HEK293 (cell line): ENCODE measurements at regions of chr2 and their contacts with region 1.

Region 1: GRCh38 chr2:176140513-176141317 is 10.6 kb upstream of the HOXD4 start:
- H3K4me3 ChIP-seq: peak overlapping the region; percentile 55
- H3K27ac ChIP-seq: peak overlapping the region; percentile 60; the same call in 1 of the 2 replicates
- H3K4me1 ChIP-seq: peaks cover 8% of the 10 kb centered on the region; the same call in 1 of the 2 replicates
- CTCF ChIP-seq: peak; percentile 97

Region 2: DNA sequence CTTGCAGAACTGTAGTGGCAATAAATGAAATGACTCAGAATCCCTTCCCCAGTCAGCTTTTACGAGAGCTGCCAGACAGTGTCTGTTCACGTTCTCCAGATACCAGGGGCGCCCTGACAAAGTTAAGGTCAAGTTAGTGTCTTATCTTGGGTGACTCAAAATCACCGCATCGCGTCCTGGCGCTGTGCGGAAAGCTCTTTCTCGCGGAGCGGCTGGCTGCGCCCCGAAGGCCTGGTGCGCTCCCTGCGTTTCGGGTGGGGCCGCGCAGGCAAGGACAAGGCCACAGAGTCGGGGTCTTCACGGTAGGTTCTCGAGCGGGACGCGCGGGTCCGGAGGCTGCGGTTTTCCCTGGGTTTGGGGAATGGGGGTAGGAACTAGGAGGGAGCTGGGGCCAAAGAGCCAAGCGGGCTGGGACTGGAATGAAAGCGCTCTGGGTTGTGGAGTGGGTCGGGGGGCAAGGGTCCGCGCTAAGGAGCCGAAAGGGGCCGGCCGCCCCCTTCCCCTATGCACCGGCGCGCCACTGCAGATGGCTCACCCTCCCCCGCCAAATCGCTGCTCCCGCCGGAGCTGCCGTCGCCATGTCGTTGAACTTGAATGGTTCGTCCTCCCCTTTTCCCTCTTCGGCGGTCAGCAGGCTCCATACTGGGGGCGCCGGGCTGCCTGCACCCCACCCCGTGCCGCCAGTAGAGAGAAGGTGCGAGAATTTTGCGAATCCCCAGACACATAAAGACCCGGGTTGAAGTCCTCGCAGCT is 36.2 kb before region 1 on chr2:
- CTCF ChIA-PET with region 1: interaction called, 3 read pairs
- POLR2A ChIA-PET with region 1: interaction called, 10 read pairs
- H3K4me3 ChIP-seq: peak overlapping the region; percentile 74
- H3K27ac ChIP-seq: peak overlapping the region; percentile 100
- H3K4me1 ChIP-seq: peaks cover 4% of the 10 kb centered on the region
- CTCF ChIP-seq: peak; percentile 96

Region 3: GRCh38 chr2:176151442-176152369 is 11.0 kb after region 1 on chr2 and contains the start of gene HOXD4:
- CTCF ChIA-PET with region 1: interaction called, 17 read pairs
- POLR2A ChIA-PET with region 1: interaction called, 5 read pairs
- H3K4me3 ChIP-seq: peak within 1 kb of the TSS; percentile 66
- H3K27ac ChIP-seq: peak within 1 kb of the TSS; percentile 95
- H3K4me1 ChIP-seq: peaks cover 20% of the 10 kb centered on the region
- CTCF ChIP-seq: no peak

Region 4: GRCh38 chr2:176445956-176446355 is 305.2 kb after region 1 on chr2:
- CTCF ChIA-PET with region 1: interaction called, 11 read pairs
- POLR2A ChIA-PET with region 1: no interaction called
- H3K4me3 ChIP-seq: no peak overlapping the region
- H3K27ac ChIP-seq: no peak overlapping the region
- H3K4me1 ChIP-seq: peaks cover 11% of the 10 kb centered on the region; the same call in 1 of the 2 replicates
- CTCF ChIP-seq: no peak

Region 5: DNA sequence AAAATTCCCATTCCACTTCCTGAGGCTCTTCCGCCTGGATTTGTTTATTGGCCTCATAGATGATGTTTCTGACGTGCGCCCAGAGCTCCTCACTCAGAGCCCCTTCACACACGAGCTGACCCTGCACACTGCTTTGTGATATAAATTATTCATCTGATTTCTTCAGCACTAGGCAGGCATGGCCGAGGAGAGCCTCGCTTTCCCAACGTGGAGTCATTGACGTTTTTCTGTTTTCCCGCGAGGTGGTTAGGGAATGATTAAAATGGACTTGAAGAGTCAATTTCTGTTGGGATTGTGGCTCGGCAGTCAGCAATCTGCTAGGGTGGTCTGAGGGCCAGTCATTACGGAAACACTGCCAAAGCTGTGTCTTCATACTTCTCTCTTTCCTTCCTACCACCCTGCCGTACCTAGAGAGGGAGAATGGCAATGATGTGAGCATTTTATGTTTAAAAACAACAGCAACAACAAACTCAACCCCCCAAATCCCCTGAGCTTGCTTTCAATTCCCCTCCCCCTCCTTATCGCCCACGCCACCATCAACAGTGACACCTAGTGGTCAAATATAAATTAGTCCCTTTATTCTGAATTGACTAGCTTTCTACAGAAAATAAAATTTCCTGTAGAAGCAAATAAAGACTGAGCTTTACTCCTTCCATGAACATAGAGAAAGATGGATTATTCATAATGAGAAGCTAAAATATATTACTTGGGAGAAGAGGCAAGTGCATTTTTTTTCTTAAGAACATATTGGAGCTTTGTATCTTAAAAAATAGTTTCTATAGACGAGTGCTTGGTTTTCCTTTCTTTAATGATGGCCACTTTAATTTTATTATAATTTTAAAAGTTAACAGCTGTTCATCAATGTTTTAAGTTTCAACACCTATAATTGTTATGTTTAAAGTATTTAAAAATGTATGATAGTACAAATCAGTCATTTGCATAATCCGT is 413.7 kb after region 1 on chr2:
- CTCF ChIA-PET with region 1: interaction called, 25 read pairs
- POLR2A ChIA-PET with region 1: no interaction called
- H3K4me3 ChIP-seq: peak overlapping the region; percentile 17
- H3K27ac ChIP-seq: peak overlapping the region; percentile 92
- H3K4me1 ChIP-seq: peaks cover 7% of the 10 kb centered on the region; the same call in 1 of the 2 replicates
- CTCF ChIP-seq: peak; percentile 90

Region 6: GRCh38 chr2:176653479-176654443 is 513.0 kb after region 1 on chr2:
- CTCF ChIA-PET with region 1: interaction called, 26 read pairs
- POLR2A ChIA-PET with region 1: no interaction called
- H3K4me3 ChIP-seq: no peak overlapping the region
- H3K27ac ChIP-seq: no peak overlapping the region
- H3K4me1 ChIP-seq: peaks cover 7% of the 10 kb centered on the region
- CTCF ChIP-seq: peak; percentile 78